PC-3 (cell line): ENCODE measurements at regions of chr5 and their contacts with region 1.

Region 1: GRCh38 chr5:34970552-34970951 is 41.2 kb downstream of the DNAJC21 start:
- DNase-seq: no peak
- ATAC-seq: no peak
- H3K4me3 ChIP-seq: no peak overlapping the region
- H3K27ac ChIP-seq: no peak overlapping the region
- H3K4me1 ChIP-seq: no peaks in the 10 kb centered on the region
- H3K27me3 ChIP-seq: no peaks in the 10 kb centered on the region
- CTCF ChIP-seq: no peak

Region 2: DNA sequence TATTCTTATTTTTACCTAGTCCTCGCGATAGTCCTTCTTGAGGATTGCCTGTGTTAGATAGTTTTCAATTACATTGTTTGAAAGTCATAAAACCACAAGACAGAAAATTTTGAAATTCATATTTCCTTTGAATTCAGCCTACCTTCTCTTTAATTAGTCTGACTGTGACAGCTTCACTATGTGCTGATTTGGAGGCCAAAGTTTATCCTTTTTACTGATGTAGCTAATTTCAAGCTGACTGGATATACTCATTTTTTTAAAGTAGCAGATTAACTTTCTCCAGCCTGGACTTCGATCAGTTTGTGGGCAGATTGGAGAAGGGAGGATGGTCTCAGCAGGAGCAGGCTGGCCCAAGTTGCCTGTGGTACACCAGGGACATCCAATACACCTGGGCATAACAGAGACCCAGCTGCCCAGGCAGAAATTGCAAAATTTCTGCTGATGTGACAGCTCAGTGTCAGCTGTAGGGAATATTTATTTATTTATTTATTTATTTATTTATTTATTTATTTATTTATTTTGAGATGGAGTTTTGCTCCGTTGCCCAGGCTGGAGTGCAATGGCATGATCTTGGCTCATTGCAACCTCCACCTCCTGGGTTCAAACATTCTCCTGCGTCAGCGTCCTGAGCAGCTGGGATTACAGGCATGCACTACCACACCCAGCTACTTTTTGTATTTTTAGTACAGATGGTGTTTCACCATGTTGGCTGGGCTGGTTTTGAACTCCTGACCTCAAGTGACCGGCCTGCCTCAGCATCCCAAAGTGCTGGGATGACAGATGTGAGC is 53.0 kb after region 1 on chr5:
- CTCF ChIA-PET with region 1: no interaction called
- POLR2A ChIA-PET with region 1: interaction called, 10 read pairs
- intact Hi-C with region 1: no loop called
- DNase-seq: no peak
- ATAC-seq: no peak
- H3K4me3 ChIP-seq: no peak overlapping the region
- H3K27ac ChIP-seq: no peak overlapping the region
- H3K4me1 ChIP-seq: no peaks in the 10 kb centered on the region
- H3K27me3 ChIP-seq: peaks cover 35% of the 10 kb centered on the region
- CTCF ChIP-seq: no peak